ENCODE measurements at regions of chr6 and their contacts with region 1.

Region 1: GRCh38 chr6:110039364-110039980 is 61.4 kb downstream of the GPR6 start:
- DNase-seq: peak; percentile 65
- ATAC-seq: peak; percentile 96
- H3K4me3 ChIP-seq: peak overlapping the region; percentile 73
- H3K27ac ChIP-seq: peak overlapping the region; percentile 17; the same call in 1 of the 2 replicates
- H3K4me1 ChIP-seq: peaks cover 3% of the 10 kb centered on the region
- H3K27me3 ChIP-seq: no peaks in the 10 kb centered on the region
- CTCF ChIP-seq: peak; percentile 90 to 97 (median 92)
- EP300 ChIP-seq: no peak
- POLR2A ChIP-seq: no peak; the same call in 1 of the 2 replicates
- RAD21 ChIP-seq: peak; percentile 98

Region 2: DNA sequence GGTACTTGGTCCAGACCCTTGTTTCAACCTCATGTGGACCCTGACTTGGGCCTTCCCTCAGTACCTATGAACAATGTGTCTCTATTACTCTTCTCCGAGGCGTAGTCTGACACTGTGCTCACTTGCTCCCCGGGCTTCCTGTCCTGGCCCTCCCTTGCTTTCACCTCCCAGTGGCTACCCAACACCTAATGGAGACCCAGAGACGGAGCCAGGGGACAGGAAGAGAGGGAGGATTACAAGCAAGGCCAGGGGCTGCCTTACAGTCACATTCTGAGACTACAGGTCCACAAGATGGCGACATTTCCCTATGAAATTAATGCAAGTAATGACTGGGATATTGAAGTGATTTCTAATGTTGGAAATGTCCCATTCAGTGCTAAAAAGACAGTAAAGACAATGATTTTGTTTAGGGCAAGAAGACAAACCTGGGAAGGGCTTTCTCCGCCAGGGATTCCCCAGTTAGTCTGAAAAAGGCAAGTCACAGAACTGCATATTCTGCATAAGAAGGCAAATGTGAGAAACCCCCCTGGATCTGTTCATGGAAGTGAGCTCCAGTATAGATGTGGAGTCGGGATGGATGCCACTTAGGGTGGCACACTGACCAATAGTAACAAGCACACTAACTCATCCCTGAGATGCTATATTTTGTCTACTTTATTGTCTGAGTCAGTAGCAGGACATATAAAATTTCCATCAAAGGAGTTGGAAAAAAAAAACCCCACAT is 512.4 kb before region 1 on chr6:
- CTCF ChIA-PET with region 1: interaction called, 58 read pairs
- POLR2A ChIA-PET with region 1: no interaction called
- RAD21 ChIA-PET with region 1: interaction called, 18 read pairs
- SMC1A ChIA-PET with region 1: interaction called, 13 read pairs
- in situ Hi-C with region 1: loop called (anchors 5 kb)
- intact Hi-C with region 1: loop called (anchors 1 kb)
- DNase-seq: peak; percentile 28
- ATAC-seq: peak; percentile 97
- H3K4me3 ChIP-seq: no peak overlapping the region
- H3K27ac ChIP-seq: no peak overlapping the region
- H3K4me1 ChIP-seq: no peaks in the 10 kb centered on the region
- H3K27me3 ChIP-seq: no peaks in the 10 kb centered on the region
- CTCF ChIP-seq: peak; percentile 54 to 80 (median 67)
- EP300 ChIP-seq: no peak
- POLR2A ChIP-seq: no peak
- RAD21 ChIP-seq: peak; percentile 79

Region 3: DNA sequence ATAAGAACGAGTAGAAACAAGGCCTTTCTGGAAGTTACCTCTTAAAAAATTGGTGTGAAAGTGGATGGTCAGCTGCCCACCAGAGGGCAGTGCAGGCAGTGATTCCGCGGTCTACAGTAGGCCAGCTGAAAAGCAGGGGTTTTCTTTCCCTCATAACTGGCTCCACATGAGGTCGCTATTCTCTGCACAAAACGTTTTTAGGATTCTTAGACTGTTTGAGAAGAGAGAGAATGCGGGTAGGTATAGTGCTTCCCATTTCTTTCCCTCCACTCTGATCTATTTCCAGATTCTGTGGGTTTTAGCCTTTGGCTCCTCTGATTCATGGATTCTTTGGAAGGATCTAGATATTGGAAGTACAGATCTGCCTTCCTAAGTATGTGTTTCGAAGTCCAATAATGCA is 334.2 kb before region 1 on chr6:
- CTCF ChIA-PET with region 1: interaction called, 203 read pairs
- POLR2A ChIA-PET with region 1: no interaction called
- RAD21 ChIA-PET with region 1: interaction called, 143 read pairs
- SMC1A ChIA-PET with region 1: interaction called, 98 read pairs
- in situ Hi-C with region 1: loop called (anchors 5 kb)
- intact Hi-C with region 1: loop called (anchors 1 kb)
- DNase-seq: peak; percentile 59
- ATAC-seq: peak; percentile 99
- H3K4me3 ChIP-seq: no peak overlapping the region
- H3K27ac ChIP-seq: no peak overlapping the region
- H3K4me1 ChIP-seq: no peaks in the 10 kb centered on the region; the same call in 1 of the 2 replicates
- H3K27me3 ChIP-seq: no peaks in the 10 kb centered on the region
- CTCF ChIP-seq: peak; percentile 89 to 100 (median 99); a peak in 5 of 6 replicates
- EP300 ChIP-seq: no peak
- POLR2A ChIP-seq: no peak
- RAD21 ChIP-seq: peak; percentile 98

Region 4: DNA sequence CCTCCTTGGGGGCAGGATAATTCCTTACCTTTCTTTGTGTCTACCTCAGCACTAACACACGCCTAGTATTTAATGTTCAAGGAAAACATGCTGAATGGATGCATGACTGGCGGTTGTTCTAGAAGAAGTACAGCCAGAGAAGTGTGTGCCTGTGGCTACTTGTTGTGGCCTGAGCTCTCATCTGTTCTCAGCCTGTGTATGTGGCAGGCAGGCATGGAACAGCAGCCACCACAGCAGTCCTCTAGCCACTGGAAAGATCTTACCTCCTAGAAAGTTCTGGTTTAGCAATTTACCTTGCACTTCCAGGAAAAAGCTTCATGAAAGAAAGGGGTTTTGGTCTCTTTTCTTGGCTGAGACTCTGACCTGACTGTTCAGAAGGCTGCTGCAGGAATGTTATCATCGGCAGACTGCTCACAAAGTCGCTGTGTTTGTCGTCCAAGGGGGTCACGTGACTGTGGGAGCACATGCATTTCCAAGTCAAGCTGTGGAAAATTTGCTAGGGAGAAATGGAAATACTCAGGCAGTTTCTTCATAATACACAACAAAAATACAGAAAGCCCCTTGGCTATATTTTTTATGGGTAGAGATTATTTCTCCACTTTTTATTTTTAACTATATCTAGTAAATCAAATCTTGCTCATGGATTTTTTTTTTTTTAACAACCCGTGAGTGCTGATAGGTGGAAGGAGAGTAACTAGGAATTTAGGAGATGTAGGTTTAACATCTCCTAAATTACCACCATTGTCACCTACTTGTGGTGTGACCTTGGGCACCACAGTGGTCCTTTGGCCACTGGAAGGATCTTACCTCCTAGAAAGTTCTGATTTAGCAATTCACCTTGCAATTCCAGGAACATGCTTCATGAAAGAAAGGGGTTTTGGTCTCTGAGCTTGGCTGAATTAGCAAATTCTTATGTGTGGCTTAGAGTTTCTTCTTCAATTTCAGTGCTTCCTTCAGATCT is 172.2 kb before region 1 on chr6:
- CTCF ChIA-PET with region 1: interaction called, 12 read pairs
- POLR2A ChIA-PET with region 1: interaction called, 4 read pairs
- RAD21 ChIA-PET with region 1: interaction called, 8 read pairs
- SMC1A ChIA-PET with region 1: interaction called, 5 read pairs
- in situ Hi-C with region 1: no loop called
- intact Hi-C with region 1: no loop called
- DNase-seq: no peak
- ATAC-seq: no peak
- H3K4me3 ChIP-seq: no peak overlapping the region
- H3K27ac ChIP-seq: no peak overlapping the region
- H3K4me1 ChIP-seq: no peaks in the 10 kb centered on the region
- H3K27me3 ChIP-seq: no peaks in the 10 kb centered on the region; a peak in 1 of 4 replicates
- CTCF ChIP-seq: no peak
- EP300 ChIP-seq: no peak
- POLR2A ChIP-seq: no peak
- RAD21 ChIP-seq: no peak

Region 5: DNA sequence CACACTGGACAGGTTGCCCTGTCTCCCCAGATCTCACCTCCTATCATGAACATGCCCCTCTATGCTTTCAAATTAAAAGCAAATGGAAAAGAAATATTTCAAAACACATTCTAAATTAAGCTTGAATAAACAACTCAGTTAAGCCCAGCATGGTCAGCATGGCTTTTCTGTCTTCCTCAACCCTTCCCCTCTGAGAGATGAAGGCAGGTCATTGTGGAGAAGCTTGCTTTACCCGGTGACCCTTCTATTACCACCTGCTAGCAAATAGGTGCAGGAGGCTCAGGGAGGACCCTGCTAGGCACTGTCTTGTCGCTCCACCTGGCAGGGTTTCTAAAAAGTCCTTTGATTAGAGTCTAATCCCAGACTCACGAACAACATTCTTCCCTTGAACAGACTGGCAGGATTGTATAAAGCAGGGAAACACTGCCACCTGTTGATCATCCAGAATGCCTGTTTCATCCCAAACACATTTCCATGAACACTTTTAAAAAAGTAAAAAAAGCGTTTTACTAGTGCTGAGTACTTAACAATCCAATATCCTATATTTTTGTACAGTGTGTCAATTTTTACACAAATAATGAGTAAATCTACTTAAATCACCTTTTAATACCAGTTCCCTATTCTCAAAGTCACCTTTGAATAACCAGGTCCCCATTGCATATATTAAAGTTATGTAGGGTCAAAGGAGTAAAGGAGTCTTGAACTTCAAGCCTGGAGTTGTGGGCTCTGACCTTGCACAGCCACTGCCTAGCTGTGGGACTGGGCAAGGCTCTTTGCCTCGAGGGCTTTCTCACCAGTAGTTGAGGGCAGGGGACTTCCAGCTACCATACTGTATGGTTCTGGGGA is 14.1 kb after region 1 on chr6:
- CTCF ChIA-PET with region 1: interaction called, 24 read pairs
- POLR2A ChIA-PET with region 1: no interaction called
- RAD21 ChIA-PET with region 1: interaction called, 4 read pairs
- SMC1A ChIA-PET with region 1: interaction called, 7 read pairs
- in situ Hi-C with region 1: no loop called
- intact Hi-C with region 1: no loop called
- DNase-seq: no peak
- ATAC-seq: peak; percentile 61
- H3K4me3 ChIP-seq: no peak overlapping the region
- H3K27ac ChIP-seq: no peak overlapping the region
- H3K4me1 ChIP-seq: no peaks in the 10 kb centered on the region
- H3K27me3 ChIP-seq: no peaks in the 10 kb centered on the region; a peak in 1 of 4 replicates
- CTCF ChIP-seq: peak; percentile 53 to 69 (median 67); a peak in 5 of 6 replicates
- EP300 ChIP-seq: no peak
- POLR2A ChIP-seq: no peak
- RAD21 ChIP-seq: peak; percentile 61

Region 6: GRCh38 chr6:110398778-110399177 is 359.3 kb after region 1 on chr6:
- CTCF ChIA-PET with region 1: interaction called, 98 read pairs
- POLR2A ChIA-PET with region 1: no interaction called
- RAD21 ChIA-PET with region 1: interaction called, 4 read pairs
- SMC1A ChIA-PET with region 1: interaction called, 10 read pairs
- in situ Hi-C with region 1: no loop called
- intact Hi-C with region 1: no loop called
- DNase-seq: no peak
- ATAC-seq: no peak
- H3K4me3 ChIP-seq: no peak overlapping the region
- H3K27ac ChIP-seq: no peak overlapping the region
- H3K4me1 ChIP-seq: no peaks in the 10 kb centered on the region
- H3K27me3 ChIP-seq: peaks cover 0 to 4% of the 10 kb centered on the region in 2 experiments; a peak in 2 of 4 replicates
- CTCF ChIP-seq: no peak
- EP300 ChIP-seq: no peak
- POLR2A ChIP-seq: no peak
- RAD21 ChIP-seq: no peak